Esophagus muscularis mucosa (tissue), 4 donors: ENCODE measurements at regions of chr9 and their contacts with region 1.

Region 1: DNA sequence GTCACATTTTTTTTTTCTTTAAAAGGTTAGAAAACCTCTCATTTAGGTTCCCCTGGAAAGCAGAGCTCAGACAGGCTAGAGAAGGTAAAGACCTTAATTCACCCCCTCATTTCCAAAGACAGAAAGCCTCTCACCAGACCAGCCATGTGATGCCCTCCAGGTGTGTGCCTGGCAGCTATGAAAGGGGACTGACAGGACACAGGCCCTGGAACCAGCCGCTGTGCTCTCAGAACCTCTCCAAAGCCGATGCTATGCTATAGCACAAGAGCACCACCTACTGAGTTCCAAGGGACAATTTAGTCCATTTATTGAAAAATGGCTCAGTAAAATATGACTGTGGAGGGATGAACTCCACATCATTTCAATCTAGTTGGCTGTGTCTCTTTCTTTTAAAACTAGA is 48.8 kb downstream of the FANCC start:
- DNase-seq: no peak
- H3K4me3 ChIP-seq: no peak overlapping the region
- H3K27ac ChIP-seq: no peak overlapping the region
- H3K4me1 ChIP-seq: peaks cover 3 to 30% (median 19%) of the 10 kb centered on the region in 4 donors
- H3K27me3 ChIP-seq: no peaks in the 10 kb centered on the region
- CTCF ChIP-seq: peak; percentile 55 to 66 (median 63)
- EP300 ChIP-seq: no peak
- POLR2A ChIP-seq: no peak

Region 2: DNA sequence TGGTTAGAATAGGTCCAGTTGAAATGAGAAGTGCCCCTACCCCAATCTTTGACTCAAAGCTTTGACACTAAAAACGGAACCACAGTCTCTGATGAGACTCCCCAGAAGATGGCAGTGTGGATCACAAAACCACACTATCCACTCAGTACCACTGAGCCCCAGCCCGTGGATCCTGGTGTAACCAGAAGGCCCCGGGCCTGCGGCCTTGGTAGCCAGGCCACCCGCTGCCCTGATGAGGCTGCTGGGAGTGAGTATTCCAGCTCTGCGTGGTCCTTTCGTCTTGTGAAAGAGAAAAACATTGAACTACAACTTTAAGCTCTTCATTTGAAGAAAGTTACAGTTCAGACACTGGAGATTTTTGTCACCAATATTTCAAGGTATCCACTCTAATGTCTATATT is 587.2 kb before region 1 on chr9:
- intact Hi-C with region 1: loop called (anchors 5 kb)
- DNase-seq: peak; percentile 93
- H3K4me3 ChIP-seq: no peak overlapping the region
- H3K27ac ChIP-seq: peak overlapping the region in 2 of 4 donors; percentile 20 to 37
- H3K4me1 ChIP-seq: peaks cover 5 to 9% (median 7%) of the 10 kb centered on the region in 4 donors
- H3K27me3 ChIP-seq: no peaks in the 10 kb centered on the region
- CTCF ChIP-seq: peak; percentile 72 to 76 (median 75)
- EP300 ChIP-seq: no peak
- POLR2A ChIP-seq: no peak

Region 3: DNA sequence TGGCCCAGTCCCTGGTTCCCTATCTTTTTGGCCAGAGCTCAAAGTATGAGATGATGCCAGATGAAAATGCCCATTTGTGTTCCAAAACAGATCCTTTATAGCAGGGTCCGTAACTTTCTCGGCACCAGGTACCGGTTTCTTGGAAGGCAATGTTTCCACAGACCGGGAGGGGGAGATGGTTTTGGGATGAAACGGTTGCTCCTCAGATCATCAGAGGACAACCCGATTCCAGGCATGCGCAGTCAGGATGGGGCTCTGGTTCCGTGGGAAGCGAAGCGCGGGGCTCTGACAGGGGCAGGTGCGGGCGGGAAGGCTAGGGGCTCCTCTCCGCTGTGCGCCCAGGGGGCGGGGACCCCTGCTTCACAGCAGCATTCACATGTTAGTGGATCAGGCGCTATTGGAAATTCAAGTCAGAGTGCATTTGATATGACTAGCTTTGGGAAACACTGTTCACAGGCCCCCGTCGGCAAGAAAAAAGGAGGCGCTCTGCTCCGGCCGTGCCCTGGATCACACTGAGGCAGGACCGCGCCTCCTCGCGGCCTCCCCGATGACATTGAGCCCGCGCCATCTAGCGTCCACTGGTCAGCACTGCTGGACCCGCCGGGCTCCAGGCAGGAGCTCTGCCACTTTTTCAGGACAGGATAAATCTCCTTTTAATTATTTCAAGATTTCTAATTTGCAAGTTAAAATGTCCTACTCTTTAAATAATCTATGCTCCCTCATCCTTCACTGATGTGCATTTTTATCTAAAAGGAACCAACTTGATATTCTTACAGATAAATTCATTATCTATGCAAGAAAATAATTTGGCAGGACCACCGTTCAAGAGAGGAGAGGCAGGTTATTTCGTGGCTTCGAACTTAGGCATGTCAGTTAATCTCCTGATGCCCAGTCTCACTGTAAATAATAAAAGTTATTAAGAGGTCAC is 141.2 kb before region 1 on chr9:
- intact Hi-C with region 1: loop called (anchors 10 kb)
- DNase-seq: no peak
- H3K4me3 ChIP-seq: peak overlapping the region; percentile 41 to 55 (median 50)
- H3K27ac ChIP-seq: peak overlapping the region; percentile 29 to 61 (median 46)
- H3K4me1 ChIP-seq: peaks cover 6 to 46% (median 41%) of the 10 kb centered on the region in 4 donors
- H3K27me3 ChIP-seq: no peaks in the 10 kb centered on the region
- CTCF ChIP-seq: peak; percentile 92 to 98 (median 98)
- EP300 ChIP-seq: no peak
- POLR2A ChIP-seq: no peak

Region 4: DNA sequence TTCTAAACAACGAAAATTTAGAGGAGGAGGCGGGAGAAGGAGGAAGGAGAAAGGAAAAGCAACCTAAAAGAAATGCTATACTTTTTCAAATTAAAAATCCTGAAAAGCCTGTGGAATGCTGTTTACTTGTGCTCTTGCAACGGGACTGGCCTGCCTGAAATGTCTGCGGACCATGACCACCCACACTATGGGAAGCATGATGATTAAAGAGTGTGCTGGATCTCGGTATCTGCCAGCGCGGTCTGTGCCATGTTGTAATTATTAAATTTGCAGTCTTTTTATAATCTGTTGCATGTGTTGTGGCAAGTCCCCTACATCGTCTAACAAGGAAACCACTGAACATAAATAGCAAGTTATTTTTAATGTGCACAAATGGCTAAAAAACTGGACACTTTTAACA is 62.5 kb before region 1 on chr9:
- intact Hi-C with region 1: loop called (anchors 10 kb)
- DNase-seq: no peak
- H3K4me3 ChIP-seq: no peak overlapping the region
- H3K27ac ChIP-seq: no peak overlapping the region
- H3K4me1 ChIP-seq: peaks cover 4 to 28% (median 19%) of the 10 kb centered on the region in 4 donors
- H3K27me3 ChIP-seq: no peaks in the 10 kb centered on the region
- CTCF ChIP-seq: no peak
- EP300 ChIP-seq: no peak
- POLR2A ChIP-seq: no peak